Right cardiac atrium (tissue), 5 donors: ENCODE measurements at regions of chr12 and their contacts with region 1.

Region 1: DNA sequence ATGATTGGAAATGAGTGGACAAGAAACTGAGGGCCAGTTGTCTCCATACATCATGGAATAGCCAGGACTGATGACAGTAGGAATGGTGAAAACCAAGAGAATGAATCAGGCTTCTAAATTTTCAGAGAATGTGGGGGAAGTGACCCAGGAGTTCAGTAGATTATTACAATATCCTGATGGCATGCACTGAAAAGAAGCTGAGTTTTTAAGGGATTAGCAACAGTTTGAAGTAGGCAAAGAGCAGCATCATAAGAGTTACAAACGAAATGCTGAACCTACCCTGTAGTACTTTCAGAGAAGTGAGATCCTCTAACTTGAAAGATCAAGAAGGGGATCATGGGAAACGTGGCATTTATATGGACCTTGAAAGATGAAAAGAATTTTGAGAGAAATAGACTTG is 13.2 kb downstream of the SLC2A14 start:
- DNase-seq: no peak
- ATAC-seq: no peak
- H3K4me3 ChIP-seq: no peak overlapping the region
- H3K27ac ChIP-seq: no peak overlapping the region
- H3K4me1 ChIP-seq: no peaks in the 10 kb centered on the region
- H3K27me3 ChIP-seq: no peaks in the 10 kb centered on the region

Region 2: GRCh38 chr12:7472060-7472459 is 387.5 kb before region 1 on chr12:
- intact Hi-C with region 1: no loop called
- DNase-seq: peak in 1 of 3 donors; percentile 30
- ATAC-seq: no peak
- H3K4me3 ChIP-seq: no peak overlapping the region
- H3K27ac ChIP-seq: no peak overlapping the region
- H3K4me1 ChIP-seq: no peaks in the 10 kb centered on the region
- H3K27me3 ChIP-seq: no peaks in the 10 kb centered on the region

Region 3: GRCh38 chr12:7806863-7807487 is 52.6 kb before region 1 on chr12:
- intact Hi-C with region 1: no loop called
- DNase-seq: peak; percentile 60 to 74 (median 72)
- ATAC-seq: peak; percentile 62 to 83
- H3K4me3 ChIP-seq: no peak overlapping the region
- H3K27ac ChIP-seq: no peak overlapping the region
- H3K4me1 ChIP-seq: no peaks in the 10 kb centered on the region
- H3K27me3 ChIP-seq: no peaks in the 10 kb centered on the region

Region 4: DNA sequence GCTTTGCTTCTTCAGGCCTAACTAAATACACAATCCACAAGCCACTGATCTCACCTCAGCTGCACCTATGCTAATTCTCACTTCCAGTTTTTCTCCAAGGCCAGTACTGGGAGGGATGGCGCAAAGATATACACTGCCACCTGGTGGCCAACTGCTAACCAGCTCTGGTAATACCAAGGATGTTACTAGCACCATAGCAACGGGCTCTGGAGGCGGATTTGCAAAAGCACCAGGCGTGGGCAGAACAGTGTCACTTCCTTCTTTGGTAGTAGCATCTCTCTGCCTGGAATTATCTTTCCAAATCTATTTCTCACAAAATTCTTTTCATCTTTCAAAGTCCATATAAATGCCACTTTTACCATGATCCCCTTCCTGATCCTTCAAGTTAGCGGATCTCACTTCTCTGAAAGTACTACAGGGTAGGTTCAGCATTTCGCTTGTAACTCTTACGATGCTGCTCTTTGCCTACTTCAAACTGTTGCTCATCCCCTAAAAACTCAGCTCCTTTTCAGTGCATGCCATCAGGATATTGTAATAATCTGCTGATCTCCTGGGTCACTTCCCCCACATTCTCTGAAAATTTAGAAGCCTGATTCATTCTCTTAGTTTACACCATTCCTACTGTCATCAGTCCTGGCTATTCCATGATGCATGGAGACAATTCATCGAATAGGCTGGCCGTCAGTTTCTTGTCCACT is 135.9 kb after region 1 on chr12:
- intact Hi-C with region 1: loop called (anchors 5 to 10 kb)
- DNase-seq: peak; percentile 80 to 87 (median 85)
- ATAC-seq: peak; percentile 99
- H3K4me3 ChIP-seq: no peak overlapping the region
- H3K27ac ChIP-seq: no peak overlapping the region
- H3K4me1 ChIP-seq: no peaks in the 10 kb centered on the region
- H3K27me3 ChIP-seq: no peaks in the 10 kb centered on the region